Panc1 (cell line): ENCODE measurements at regions of chrX and their contacts with region 1.

Region 1: DNA sequence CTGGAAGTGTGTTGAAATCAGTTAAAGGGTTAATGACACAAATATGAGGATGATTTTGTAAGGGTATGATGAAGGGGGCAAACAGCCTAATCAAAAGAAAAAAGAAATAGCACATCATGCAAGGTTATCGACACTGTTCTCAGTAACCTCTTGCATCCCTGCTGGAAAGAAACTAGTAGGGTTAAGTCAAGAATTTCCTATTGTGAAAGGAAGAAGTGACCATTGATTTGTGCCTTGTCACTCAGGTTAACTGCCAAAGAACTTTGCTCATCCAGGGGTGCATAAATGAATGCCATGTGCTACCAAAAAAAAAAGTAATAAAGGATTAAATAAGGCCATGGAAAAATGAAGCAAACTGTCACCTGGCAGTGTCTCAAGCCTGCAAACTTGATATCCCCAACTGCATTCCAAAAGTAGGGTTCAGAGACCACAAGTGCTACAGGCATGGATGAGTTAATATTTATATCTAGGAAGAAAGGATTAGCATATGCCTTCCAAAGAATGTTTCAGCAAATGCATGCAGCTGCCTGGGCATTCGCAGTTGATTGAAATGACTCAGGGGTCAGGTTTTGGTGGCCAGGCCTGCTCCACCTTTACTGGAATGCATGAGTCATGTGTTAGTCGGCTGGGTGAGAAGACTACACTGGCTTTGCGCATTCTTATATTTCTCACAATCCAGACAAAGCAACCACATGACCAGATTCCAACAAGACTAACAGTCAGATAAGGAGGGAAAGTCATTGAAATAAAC is 78.4 kb upstream of the ATXN3L start:
- DNase-seq: peak; percentile 84
- ATAC-seq: peak; percentile 99
- H3K4me3 ChIP-seq: no peak overlapping the region
- H3K27ac ChIP-seq: peak overlapping the region; percentile 90
- H3K4me1 ChIP-seq: no peaks in the 10 kb centered on the region
- H3K27me3 ChIP-seq: no peaks in the 10 kb centered on the region
- CTCF ChIP-seq: no peak

Region 2: DNA sequence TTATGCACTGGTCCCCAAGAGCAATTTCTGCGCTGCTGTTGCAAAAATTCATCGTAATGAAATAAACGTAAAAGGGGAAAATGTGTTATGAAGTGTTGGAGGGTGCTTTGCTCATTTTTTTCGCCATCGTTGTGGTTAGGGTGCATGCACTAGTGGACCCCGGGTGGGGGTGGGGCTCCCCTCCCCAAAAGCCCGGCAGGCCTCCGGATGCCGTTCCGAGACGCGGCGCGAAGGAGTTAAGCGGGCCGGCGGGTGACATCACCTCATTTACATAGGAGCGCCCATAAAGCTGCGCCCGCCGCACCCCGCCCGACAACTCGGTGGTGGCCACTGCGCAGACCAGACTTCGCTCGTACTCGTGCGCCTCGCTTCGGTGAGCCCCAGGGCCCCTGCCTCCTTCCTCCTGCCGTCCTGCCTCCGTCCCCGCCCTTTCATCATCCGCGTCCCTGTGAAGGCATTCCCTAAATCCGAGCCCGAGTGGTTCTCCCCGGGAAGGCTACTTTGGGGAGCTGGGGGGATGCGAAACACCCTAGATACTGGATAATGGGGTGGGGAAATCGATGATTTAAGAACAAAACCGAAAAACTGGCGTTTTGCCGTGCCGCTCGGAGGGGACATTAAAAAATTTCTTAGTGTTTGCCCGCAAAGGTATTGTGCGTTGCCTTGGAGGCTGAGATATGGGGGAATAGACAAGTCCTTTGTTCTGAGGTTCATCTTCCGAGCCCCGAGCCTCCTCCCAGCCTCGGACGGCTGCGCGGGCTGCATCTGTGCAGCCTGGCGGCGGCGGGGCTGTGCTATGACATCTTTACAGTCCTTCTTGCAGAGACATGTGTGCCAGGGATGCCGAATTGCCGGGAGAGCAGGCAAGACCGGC is 423.2 kb before region 1 on chrX and contains the start of gene TMSB4X:
- CTCF ChIA-PET with region 1: no interaction called
- POLR2A ChIA-PET with region 1: no interaction called
- in situ Hi-C with region 1: no loop called
- intact Hi-C with region 1: loop called (anchors 2 kb)
- DNase-seq: no peak
- ATAC-seq: peak; percentile 76
- H3K4me3 ChIP-seq: peak within 1 kb of the TSS; percentile 68 to 80
- H3K27ac ChIP-seq: peak within 1 kb of the TSS; percentile 96
- H3K4me1 ChIP-seq: peaks cover 12% of the 10 kb centered on the region
- H3K27me3 ChIP-seq: no peaks in the 10 kb centered on the region
- CTCF ChIP-seq: no peak
- total RNA-seq, gene TMSB4X: 2,928 TPM

Region 3: DNA sequence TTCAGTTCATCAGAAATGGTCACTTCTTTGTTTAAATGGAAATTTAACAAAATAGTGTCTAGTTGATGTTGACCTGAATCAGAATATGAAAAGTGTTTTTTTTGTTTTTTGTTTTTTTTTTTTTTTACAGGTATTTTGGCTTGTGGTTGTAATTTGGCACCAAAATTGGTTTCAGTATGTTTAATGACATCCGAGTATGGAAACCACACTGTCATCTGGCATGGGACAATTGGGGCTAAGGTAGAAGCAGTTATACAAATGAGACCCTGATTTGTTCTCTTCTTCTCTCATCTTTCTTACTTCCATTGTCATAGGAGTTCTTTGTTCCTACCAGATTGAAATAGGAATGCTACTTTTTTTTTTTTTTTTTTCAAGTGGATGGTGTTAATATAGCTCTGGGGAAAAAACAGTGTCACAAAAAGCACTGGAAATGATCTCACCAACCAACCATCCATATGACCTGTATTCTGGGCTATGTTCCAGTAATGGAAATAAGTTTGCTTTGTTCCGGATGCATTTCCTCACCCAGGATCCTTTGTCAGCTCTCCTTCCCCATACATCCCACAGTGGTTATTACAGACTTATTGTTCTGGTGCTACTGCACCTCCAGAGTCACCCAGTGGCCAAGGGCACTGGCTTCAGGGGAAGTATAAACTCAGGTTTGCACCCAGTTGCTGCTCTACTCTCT is 174.2 kb before region 1 on chrX:
- CTCF ChIA-PET with region 1: no interaction called
- POLR2A ChIA-PET with region 1: no interaction called
- in situ Hi-C with region 1: no loop called
- intact Hi-C with region 1: loop called (anchors 10 kb)
- DNase-seq: peak; percentile 70
- ATAC-seq: peak; percentile 75
- H3K4me3 ChIP-seq: no peak overlapping the region
- H3K27ac ChIP-seq: peak overlapping the region; percentile 61
- H3K4me1 ChIP-seq: peaks cover 13% of the 10 kb centered on the region
- H3K27me3 ChIP-seq: no peaks in the 10 kb centered on the region
- CTCF ChIP-seq: no peak; the same call in 1 of the 2 replicates

Region 4: DNA sequence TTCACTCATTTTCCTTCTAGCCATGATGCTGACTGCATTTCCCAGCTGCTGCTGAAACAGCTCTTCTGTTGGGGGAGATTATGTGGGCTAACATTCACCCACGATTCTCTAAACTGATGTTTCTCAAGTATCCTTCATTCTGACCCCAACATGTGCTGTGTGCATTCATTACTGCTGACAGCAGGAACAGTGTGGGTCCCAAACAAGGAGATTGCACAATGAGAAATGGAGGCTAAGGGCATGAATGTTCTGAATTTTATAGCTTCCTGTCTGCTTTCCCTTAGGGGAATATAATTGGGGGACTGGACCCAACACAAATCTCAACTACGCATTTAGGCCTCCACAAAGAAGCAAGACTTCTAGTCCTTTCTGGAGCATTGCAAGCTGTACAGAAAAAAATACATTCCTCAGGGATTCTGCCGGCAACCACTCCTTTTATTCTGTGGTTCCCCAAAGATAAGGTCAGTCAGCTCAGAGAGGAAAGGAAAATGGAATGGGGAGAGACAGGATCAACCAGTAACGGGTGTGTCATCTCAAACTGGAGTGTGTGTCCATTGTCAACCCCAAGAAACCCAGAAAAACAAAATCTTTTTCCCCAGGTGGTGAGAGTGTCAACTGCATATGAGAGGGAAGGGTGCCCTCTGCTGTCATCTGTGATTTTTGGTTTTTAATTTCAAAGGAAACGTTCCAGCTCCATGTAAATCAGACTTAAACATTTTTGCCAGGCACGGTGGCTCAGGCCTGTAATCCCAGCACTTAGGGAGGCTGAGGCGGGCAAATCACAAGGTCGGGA is 89.7 kb after region 1 on chrX:
- CTCF ChIA-PET with region 1: no interaction called
- POLR2A ChIA-PET with region 1: no interaction called
- in situ Hi-C with region 1: no loop called
- intact Hi-C with region 1: loop called (anchors 5 kb)
- DNase-seq: peak; percentile 48
- ATAC-seq: peak; percentile 85
- H3K4me3 ChIP-seq: no peak overlapping the region
- H3K27ac ChIP-seq: peak overlapping the region; percentile 88
- H3K4me1 ChIP-seq: peaks cover 3% of the 10 kb centered on the region; the same call in 1 of the 2 replicates
- H3K27me3 ChIP-seq: no peaks in the 10 kb centered on the region
- CTCF ChIP-seq: peak; percentile 55